ENCODE measurements at regions of chrX and their contacts with region 1.

Region 1: DNA sequence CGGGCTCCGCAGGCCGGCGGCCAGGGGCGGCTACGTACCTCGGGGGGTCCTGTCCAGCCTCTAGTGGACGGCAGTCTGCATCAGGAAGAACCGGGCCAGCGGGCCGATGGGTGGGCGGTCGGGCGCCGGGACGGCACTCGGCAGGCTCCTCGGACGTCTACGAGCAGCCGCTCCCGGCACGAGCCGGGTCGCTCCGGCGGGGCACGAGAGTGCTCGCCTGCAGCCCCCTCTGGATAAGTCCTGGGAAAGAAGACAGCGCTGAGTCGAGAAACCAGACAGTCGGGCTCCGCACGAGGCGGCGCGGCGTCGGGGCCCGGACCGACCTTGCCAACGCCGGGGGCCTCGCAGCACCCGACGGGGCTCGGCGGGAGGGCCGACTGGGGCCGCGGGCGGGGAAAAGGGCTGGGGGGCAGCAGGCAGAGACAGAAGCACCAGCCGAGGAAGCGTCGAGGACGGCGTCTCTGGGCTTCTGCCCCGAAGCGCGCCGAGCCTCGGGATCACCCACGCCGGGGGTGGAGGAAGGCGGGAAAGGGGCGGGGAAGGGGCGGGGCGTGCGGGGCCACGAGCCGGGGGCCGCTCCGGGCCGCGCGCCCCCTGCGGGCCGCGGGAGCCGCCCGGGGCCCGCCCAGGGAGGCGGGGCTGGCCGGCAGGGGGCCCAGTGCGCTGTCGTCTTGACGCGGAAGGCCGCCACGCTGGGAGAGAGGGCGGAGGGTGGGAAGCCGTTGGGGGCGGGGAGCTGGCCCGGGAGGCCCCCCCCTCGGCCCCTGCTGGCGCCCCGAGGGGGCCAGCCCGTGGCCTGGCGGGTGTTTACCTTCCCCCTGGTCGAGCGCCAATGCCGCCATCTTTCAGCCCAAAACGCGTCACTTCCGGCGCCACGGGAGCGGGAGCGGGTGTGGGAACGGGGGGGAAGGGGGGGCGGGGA is 1.9 kb downstream of the KLHL15 start:
- DNase-seq: peak; percentile 70
- ATAC-seq: peak; percentile 91
- H3K4me3 Mint-ChIP-seq: peak overlapping the region; percentile 85
- H3K27ac Mint-ChIP-seq: peak overlapping the region; percentile 82
- H3K4me1 Mint-ChIP-seq: peaks cover 21% of the 10 kb centered on the region
- H3K27me3 Mint-ChIP-seq: no peaks in the 10 kb centered on the region
- CTCF ChIP-seq: no peak

Region 2: GRCh38 chrX:23907498-23908218 is 117.4 kb before region 1 on chrX and contains the starts of genes APOO and CXorf58:
- CTCF ChIA-PET with region 1: interaction called, 7 read pairs
- POLR2A ChIA-PET with region 1: interaction called, 20 read pairs
- intact Hi-C with region 1: loop called (anchors 1 kb)
- DNase-seq: peak; percentile 85
- ATAC-seq: peak; percentile 90
- H3K4me3 Mint-ChIP-seq: peak within 1 kb of the TSS; percentile 82
- H3K27ac Mint-ChIP-seq: peak within 1 kb of the TSS; percentile 88
- H3K4me1 Mint-ChIP-seq: peaks cover 17% of the 10 kb centered on the region
- H3K27me3 Mint-ChIP-seq: no peaks in the 10 kb centered on the region
- CTCF ChIP-seq: peak; percentile 7
- total RNA-seq, gene APOO: 14.0 and 16.6 TPM in 2 replicates
- total RNA-seq, gene CXorf58: not detected in 2 replicates

Region 3: DNA sequence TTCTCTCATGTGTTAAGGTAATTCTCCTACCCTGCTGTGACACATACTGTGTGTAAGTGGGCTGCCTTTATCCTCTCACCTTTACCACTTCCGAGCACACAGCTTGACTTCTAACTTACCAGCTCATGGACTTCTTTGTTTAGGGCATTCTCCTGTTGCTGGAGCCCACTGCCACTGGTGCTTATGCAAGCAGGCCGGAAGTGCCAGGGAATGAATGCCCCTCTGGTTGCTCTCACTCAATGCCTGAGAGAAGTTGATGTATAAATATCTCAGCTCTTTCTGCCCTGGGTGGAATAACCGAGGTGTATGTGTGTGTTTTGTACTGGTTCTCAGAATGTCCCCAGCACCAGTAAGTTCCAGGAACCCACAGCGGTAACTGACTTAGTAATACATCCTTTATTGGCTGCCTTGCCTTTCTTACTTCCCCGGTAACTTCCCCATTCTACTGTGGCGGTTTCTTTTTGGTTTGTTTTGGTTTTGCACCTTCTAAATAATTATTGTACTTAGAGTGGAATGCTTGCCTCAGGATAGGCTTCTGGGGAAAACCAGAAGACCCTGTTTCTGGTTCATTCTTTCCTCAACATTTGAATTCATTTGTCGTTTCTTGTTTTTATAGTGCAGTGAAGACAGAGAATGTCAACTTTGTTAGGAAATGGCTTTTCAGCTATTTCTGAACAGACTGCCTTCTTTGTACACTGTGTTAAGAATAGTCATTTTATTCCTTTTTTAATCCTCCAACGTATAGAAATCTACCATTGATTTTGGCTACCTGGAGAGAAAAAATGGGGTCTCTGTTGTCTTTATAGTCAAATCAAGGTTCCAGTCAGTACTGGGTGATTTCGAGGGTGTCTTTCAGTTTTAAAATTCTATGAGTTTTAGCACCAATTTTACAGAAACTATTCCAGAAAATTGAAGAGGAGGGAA is 71.8 kb before region 1 on chrX:
- CTCF ChIA-PET with region 1: no interaction called
- POLR2A ChIA-PET with region 1: interaction called, 3 read pairs
- intact Hi-C with region 1: loop called (anchors 2 kb)
- DNase-seq: peak; percentile 13
- ATAC-seq: peak; percentile 92
- H3K4me3 Mint-ChIP-seq: peak overlapping the region; percentile 72
- H3K27ac Mint-ChIP-seq: peak overlapping the region; percentile 90
- H3K4me1 Mint-ChIP-seq: peaks cover 12% of the 10 kb centered on the region
- H3K27me3 Mint-ChIP-seq: no peaks in the 10 kb centered on the region
- CTCF ChIP-seq: no peak

Measured in activated B cell treated with CpG ODN at 0.5 μM for 24 hours (primary cell).